ENCODE measurements at regions of chr18 and their contacts with region 1.

Region 1: DNA sequence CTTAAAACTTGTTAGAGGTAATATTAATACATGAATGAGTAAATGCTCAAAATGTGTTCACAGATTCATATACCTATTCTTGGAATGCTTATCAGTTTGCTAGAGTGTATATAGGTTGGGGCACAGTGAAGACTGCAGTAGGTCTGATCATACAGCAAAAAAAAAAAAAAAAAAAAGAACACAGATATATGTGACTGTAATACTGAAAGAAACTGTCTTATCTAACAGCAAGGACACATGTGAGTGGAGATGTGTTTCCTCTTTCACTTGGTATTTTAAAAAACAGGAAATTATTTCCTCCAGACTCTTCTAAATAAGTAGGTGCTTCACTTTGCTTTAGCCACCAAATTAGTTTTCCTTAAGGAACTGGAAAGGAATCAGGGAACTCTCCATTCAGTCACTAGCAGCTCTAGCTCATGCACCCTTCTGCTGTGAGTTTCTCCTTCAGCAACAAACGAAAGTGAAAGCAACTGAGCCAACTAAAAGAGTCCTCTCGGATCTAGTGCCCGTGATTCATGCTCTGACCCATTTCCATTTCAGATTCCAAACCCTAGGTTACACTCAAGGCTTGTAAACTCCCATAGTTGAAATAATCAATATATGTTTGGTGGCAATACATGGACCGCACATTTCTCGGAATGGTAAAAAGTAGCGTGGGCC is 98.5 kb downstream of the DSEL start:
- DNase-seq: peak; percentile 9
- ATAC-seq: peak; percentile 95
- H3K4me3 Mint-ChIP-seq: peak overlapping the region; percentile 26
- H3K27ac Mint-ChIP-seq: peak overlapping the region; percentile 20
- H3K4me1 Mint-ChIP-seq: peaks cover 10% of the 10 kb centered on the region
- H3K27me3 Mint-ChIP-seq: no peaks in the 10 kb centered on the region

Region 2: GRCh38 chr18:67047334-67047733 is 370.7 kb before region 1 on chr18:
- CTCF ChIA-PET with region 1: no interaction called
- POLR2A ChIA-PET with region 1: no interaction called
- intact Hi-C with region 1: no loop called
- DNase-seq: no peak
- ATAC-seq: no peak
- H3K4me3 Mint-ChIP-seq: no peak overlapping the region
- H3K27ac Mint-ChIP-seq: no peak overlapping the region
- H3K4me1 Mint-ChIP-seq: no peaks in the 10 kb centered on the region
- H3K27me3 Mint-ChIP-seq: no peaks in the 10 kb centered on the region

Region 3: GRCh38 chr18:67433971-67434370 is 16.0 kb after region 1 on chr18:
- CTCF ChIA-PET with region 1: no interaction called
- POLR2A ChIA-PET with region 1: no interaction called
- intact Hi-C with region 1: loop called in 1 of 2 experiments (anchors 2 kb)
- DNase-seq: no peak
- ATAC-seq: no peak
- H3K4me3 Mint-ChIP-seq: no peak overlapping the region
- H3K27ac Mint-ChIP-seq: no peak overlapping the region
- H3K4me1 Mint-ChIP-seq: no peaks in the 10 kb centered on the region
- H3K27me3 Mint-ChIP-seq: no peaks in the 10 kb centered on the region